RWPE1 (cell line): ENCODE measurements at regions of chr1 and their contacts with region 1.

Region 1: GRCh38 chr1:221308534-221309511 is 429.6 kb downstream of the HLX start:
- DNase-seq: no peak
- H3K27ac ChIP-seq: no peak overlapping the region
- CTCF ChIP-seq: no peak

Region 2: DNA sequence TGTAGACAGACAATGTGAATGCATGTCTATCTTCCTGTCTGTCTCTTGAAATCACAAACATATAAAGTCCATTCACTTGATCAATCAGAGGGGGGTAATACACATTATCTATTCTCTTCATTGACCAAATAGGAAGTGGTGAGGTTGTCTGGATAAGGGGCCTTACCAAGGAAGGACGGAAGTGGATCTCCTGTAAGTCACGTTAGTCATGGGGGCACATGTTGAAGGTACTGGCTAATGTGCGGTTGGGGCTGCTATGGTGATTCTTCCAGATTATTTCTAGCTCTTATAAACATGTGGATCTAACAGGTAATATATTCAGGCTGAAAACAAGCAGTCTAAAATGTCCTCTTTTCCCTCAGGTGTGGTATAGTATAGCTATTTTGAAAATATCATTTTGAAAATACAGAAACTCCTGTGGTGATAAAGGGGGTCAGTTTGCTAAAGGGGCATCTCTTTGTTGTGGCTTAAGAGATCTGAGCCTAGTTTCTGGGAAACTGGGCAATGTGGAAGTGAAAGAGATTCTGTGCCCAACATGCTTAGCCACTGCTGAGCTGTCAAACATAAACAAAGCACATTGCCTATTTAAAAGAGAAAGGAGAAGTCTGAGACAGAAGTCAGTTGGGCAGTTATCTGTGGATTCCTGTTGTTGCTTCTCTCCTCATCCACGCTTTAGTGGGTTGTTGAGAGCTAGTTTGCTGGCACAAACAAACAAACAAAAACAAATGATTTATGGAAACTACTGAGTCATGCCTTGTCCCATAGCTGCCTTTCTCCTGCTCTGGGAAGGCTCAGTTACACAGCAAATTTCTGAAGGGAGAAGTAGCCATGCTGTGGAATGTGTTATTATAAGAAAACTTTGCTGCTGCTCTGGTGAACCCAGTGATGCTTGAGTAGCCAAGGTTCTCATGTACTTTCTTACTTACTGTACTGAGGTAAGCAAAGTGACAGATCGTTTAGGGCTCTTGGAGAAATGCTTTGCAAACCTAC is 262.7 kb before region 1 on chr1:
- CTCF ChIA-PET with region 1: no interaction called
- POLR2A ChIA-PET with region 1: no interaction called
- DNase-seq: no peak
- H3K27ac ChIP-seq: no peak overlapping the region
- CTCF ChIP-seq: no peak

Region 3: GRCh38 chr1:221263831-221264767 is 44.7 kb before region 1 on chr1:
- CTCF ChIA-PET with region 1: no interaction called
- POLR2A ChIA-PET with region 1: interaction called, 20 read pairs
- DNase-seq: peak; percentile 25
- H3K27ac ChIP-seq: no peak overlapping the region
- CTCF ChIP-seq: no peak

Region 4: DNA sequence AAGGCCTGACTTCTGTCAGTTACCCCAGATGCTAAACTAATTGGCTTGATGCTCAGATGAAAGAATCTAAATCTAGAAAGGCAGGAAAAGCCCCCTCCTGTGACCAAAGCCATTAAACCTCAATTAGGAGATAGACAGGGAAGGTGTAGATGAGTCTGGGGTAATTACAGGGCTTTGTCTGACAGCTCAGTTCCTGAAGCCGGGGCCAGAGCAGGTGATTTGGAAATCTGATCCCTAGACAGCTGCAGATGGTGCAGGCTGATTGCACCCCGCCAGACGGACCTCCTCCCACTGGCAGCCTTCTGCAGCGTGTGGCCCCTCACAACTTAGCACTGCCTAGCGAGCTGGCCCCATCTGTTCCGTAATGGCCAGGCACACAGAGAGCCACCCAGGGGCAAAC is 34.5 kb before region 1 on chr1:
- CTCF ChIA-PET with region 1: no interaction called
- POLR2A ChIA-PET with region 1: no interaction called
- DNase-seq: no peak
- H3K27ac ChIP-seq: no peak overlapping the region
- CTCF ChIP-seq: no peak